ENCODE measurements at regions of chr14 and their contacts with region 1.

Region 1: DNA sequence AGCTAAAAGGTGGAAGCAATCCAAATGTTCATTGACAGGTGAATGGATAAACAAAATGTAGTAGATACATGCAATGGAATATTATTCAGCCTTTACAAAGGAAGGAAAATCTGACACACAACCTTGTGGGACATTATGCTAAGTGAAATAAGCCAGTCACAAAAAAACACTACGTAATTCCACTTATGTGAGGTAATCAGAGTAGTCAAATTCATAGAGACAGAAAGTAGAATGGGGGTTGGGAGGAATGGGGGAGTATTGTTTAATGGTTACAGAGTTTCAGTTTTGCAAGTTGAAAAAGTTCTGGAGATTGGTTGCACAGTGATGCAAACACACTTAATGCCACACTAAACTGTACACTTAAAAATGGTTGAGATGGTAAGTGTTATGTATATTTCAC is 62.8 kb downstream of the LIN52 start:
- DNase-seq: no peak
- H3K4me3 ChIP-seq: no peak overlapping the region
- H3K27ac ChIP-seq: no peak overlapping the region
- H3K4me1 ChIP-seq: no peaks in the 10 kb centered on the region
- CTCF ChIP-seq: no peak

Region 2: GRCh38 chr14:73627151-73627558 is 520.4 kb before region 1 on chr14:
- CTCF ChIA-PET with region 1: no interaction called
- POLR2A ChIA-PET with region 1: interaction called, 10 read pairs
- intact Hi-C with region 1: no loop called
- DNase-seq: no peak
- H3K4me3 ChIP-seq: no peak overlapping the region
- H3K27ac ChIP-seq: no peak overlapping the region
- H3K4me1 ChIP-seq: no peaks in the 10 kb centered on the region
- CTCF ChIP-seq: no peak

Region 3: GRCh38 chr14:73973497-73973896 is 174.1 kb before region 1 on chr14:
- CTCF ChIA-PET with region 1: no interaction called
- POLR2A ChIA-PET with region 1: no interaction called
- intact Hi-C with region 1: no loop called
- DNase-seq: no peak
- H3K4me3 ChIP-seq: no peak overlapping the region
- H3K27ac ChIP-seq: no peak overlapping the region
- H3K4me1 ChIP-seq: no peaks in the 10 kb centered on the region
- CTCF ChIP-seq: no peak

Region 4: DNA sequence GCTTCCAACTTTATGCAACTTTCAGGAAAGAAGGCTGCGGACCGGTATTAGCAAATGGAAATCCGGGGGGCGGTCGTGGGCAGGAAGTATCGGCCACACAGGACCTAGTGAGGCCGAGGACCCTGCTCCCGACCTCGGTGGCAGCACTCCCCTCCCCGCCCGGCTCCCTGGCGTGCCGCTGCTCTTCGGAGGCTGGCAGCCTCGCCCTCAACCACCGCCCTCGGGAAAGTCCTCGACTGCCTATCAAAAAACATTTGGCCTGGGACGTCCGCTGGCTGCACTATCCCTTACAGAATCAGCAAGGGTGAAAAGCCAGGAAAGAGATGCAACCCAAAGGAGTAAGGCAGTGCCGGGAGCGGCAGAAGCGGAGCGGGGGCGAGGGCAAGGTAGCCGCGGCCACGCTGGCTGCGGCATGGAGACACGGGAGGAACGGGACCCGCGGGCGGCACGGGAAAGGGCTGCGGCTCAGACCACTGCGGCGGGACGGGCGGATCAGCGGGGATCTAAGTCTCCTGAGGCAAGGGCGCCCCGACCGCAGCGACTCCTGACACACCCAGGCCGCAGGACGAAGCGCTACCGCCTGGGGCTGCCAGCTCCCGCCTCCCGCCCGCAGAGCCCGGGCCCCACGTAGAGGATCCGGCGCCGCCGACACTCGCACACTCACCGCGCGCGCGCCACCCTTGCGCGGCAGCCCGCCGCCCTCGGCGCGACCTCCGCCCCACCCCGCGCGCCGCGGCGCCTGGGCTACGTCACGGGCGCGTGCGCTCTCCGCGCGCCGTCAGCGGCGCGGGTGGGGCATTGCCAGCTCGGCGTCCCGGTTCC is 128.8 kb before region 1 on chr14 and contains the starts of genes BBOF1 and ENTPD5:
- CTCF ChIA-PET with region 1: no interaction called
- POLR2A ChIA-PET with region 1: no interaction called
- intact Hi-C with region 1: no loop called
- DNase-seq: peak; percentile 84
- H3K4me3 ChIP-seq: peak within 1 kb of the TSS; percentile 86
- H3K27ac ChIP-seq: peak within 1 kb of the TSS; percentile 31
- H3K4me1 ChIP-seq: peaks cover 3% of the 10 kb centered on the region
- CTCF ChIP-seq: no peak
- total RNA-seq, gene BBOF1: 1.7 and 2.9 TPM in 2 replicates
- total RNA-seq, gene ENTPD5: 7.5 and 7.8 TPM in 2 replicates

Measured in OCI-LY7 (cell line).